Activated CD4-positive, alpha-beta memory T cell treated with anti-CD3 and anti-CD28 coated beads for 36 hours (primary cell): ENCODE measurements at regions of chr1 and their contacts with region 1.

Region 1: GRCh38 chr1:45583264-45583665 is 576 bp upstream of the NASP start:
- DNase-seq: peak; percentile 96
- H3K4me3 Mint-ChIP-seq: peak overlapping the region; percentile 99
- H3K27ac Mint-ChIP-seq: peak overlapping the region; percentile 98
- H3K4me1 Mint-ChIP-seq: peaks cover 25% of the 10 kb centered on the region
- H3K27me3 Mint-ChIP-seq: no peaks in the 10 kb centered on the region

Region 2: GRCh38 chr1:44807262-44808062 is 775.8 kb before region 1 on chr1 and contains the start of gene DYNLT4:
- CTCF ChIA-PET with region 1: no interaction called
- POLR2A ChIA-PET with region 1: no interaction called
- intact Hi-C with region 1: loop called (anchors 5 kb)
- DNase-seq: peak; percentile 95
- H3K4me3 Mint-ChIP-seq: peak within 1 kb of the TSS; percentile 73
- H3K27ac Mint-ChIP-seq: peak within 1 kb of the TSS; percentile 98
- H3K4me1 Mint-ChIP-seq: peaks cover 90% of the 10 kb centered on the region
- H3K27me3 Mint-ChIP-seq: no peaks in the 10 kb centered on the region
- total RNA-seq, gene DYNLT4: 0.40 to 0.41 TPM

Region 3: DNA sequence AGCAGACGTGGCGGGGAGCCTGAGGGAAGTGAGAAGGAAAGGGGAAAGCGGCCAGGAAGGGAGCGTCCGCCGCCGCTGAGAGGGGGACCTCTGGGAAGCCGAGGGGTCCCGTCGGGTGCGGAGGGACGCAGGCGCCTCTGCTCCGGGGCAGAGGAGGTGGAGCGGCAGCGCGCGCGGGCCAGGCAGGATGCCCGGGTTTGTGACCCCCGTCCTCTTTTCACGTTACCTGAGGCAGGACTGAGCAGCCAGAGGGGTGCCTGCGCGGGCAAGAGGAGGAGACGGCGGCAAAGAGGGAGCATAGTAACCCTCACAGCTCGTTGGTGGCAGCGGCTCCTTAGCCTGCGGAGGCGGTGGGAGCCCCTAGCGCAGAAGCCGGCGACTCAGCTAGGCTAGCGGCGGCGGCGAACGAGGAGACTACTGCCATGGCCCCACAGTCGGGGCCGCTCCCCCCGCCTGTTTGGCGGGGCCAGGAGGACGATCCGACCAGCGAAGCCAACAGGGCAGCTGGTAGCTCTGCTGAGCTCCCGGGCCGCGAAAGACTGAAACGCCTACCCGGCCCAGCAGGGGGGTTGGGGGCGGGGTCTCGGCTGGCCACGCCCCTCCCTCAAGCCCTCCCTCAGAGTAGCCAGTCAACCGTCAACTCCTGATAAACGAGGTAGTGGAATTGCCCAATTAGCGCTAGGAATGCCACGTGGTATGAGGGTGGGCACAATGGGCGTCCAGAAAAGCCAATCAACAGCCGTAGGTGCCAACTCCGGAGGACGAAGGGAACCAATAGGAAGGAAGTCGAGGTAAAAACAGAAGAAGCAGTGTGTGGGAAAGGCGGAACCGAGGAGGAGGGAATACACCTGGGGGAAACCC is 92.4 kb before region 1 on chr1 and contains the start of gene TESK2:
- CTCF ChIA-PET with region 1: interaction called, 9 read pairs
- POLR2A ChIA-PET with region 1: interaction called, 4 read pairs
- intact Hi-C with region 1: loop called (anchors 1 kb)
- DNase-seq: peak; percentile 98
- H3K4me3 Mint-ChIP-seq: no peak within 1 kb of the TSS
- H3K27ac Mint-ChIP-seq: no peak within 1 kb of the TSS
- H3K4me1 Mint-ChIP-seq: peaks cover 6% of the 10 kb centered on the region
- H3K27me3 Mint-ChIP-seq: no peaks in the 10 kb centered on the region
- total RNA-seq, gene TESK2: 4.6 to 6.0 TPM

Region 4: GRCh38 chr1:45521398-45522323 is 61.6 kb before region 1 on chr1 and contains the start of gene PRDX1:
- CTCF ChIA-PET with region 1: no interaction called
- POLR2A ChIA-PET with region 1: interaction called, 32 read pairs
- intact Hi-C with region 1: loop called (anchors 2 kb)
- DNase-seq: peak; percentile 98
- H3K4me3 Mint-ChIP-seq: peak within 1 kb of the TSS; percentile 94
- H3K27ac Mint-ChIP-seq: peak within 1 kb of the TSS; percentile 94
- H3K4me1 Mint-ChIP-seq: peaks cover 43% of the 10 kb centered on the region
- H3K27me3 Mint-ChIP-seq: peaks cover 1% of the 10 kb centered on the region
- total RNA-seq, gene PRDX1: 479 to 481 TPM

Region 5: GRCh38 chr1:45569962-45570581 is 13.2 kb before region 1 on chr1:
- CTCF ChIA-PET with region 1: interaction called, 15 read pairs
- POLR2A ChIA-PET with region 1: interaction called, 3 read pairs
- intact Hi-C with region 1: no loop called
- DNase-seq: peak; percentile 81
- H3K4me3 Mint-ChIP-seq: no peak overlapping the region
- H3K27ac Mint-ChIP-seq: peak overlapping the region; percentile 16
- H3K4me1 Mint-ChIP-seq: no peaks in the 10 kb centered on the region
- H3K27me3 Mint-ChIP-seq: no peaks in the 10 kb centered on the region

Region 6: GRCh38 chr1:45843474-45843905 is 260.2 kb after region 1 on chr1:
- CTCF ChIA-PET with region 1: no interaction called
- POLR2A ChIA-PET with region 1: no interaction called
- intact Hi-C with region 1: loop called (anchors 5 kb)
- DNase-seq: no peak
- H3K4me3 Mint-ChIP-seq: no peak overlapping the region
- H3K27ac Mint-ChIP-seq: peak overlapping the region; percentile 2
- H3K4me1 Mint-ChIP-seq: peaks cover 13% of the 10 kb centered on the region
- H3K27me3 Mint-ChIP-seq: no peaks in the 10 kb centered on the region

Region 7: DNA sequence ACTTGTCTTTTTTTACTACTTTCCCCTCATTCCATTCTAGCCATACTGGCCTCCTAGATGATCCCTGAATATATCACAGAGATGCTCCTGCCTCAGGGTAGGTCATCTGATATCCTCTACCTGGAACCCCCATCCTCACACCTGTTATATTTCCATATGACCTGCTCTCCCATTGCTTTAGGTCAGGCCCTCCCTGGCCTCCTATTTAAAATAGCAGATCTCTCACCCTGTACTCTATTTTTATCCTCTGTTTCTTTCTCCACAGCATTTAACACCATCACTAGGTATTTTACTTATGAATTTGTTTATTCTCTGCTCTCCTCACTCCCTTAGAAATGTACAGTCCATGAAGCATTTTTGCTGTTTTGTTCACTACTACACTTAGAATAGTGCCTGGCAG is 535.6 kb after region 1 on chr1:
- CTCF ChIA-PET with region 1: no interaction called
- POLR2A ChIA-PET with region 1: no interaction called
- intact Hi-C with region 1: no loop called
- DNase-seq: no peak
- H3K4me3 Mint-ChIP-seq: no peak overlapping the region
- H3K27ac Mint-ChIP-seq: no peak overlapping the region
- H3K4me1 Mint-ChIP-seq: no peaks in the 10 kb centered on the region
- H3K27me3 Mint-ChIP-seq: no peaks in the 10 kb centered on the region